ENCODE measurements at regions of chr12 and their contacts with region 1.

Region 1: DNA sequence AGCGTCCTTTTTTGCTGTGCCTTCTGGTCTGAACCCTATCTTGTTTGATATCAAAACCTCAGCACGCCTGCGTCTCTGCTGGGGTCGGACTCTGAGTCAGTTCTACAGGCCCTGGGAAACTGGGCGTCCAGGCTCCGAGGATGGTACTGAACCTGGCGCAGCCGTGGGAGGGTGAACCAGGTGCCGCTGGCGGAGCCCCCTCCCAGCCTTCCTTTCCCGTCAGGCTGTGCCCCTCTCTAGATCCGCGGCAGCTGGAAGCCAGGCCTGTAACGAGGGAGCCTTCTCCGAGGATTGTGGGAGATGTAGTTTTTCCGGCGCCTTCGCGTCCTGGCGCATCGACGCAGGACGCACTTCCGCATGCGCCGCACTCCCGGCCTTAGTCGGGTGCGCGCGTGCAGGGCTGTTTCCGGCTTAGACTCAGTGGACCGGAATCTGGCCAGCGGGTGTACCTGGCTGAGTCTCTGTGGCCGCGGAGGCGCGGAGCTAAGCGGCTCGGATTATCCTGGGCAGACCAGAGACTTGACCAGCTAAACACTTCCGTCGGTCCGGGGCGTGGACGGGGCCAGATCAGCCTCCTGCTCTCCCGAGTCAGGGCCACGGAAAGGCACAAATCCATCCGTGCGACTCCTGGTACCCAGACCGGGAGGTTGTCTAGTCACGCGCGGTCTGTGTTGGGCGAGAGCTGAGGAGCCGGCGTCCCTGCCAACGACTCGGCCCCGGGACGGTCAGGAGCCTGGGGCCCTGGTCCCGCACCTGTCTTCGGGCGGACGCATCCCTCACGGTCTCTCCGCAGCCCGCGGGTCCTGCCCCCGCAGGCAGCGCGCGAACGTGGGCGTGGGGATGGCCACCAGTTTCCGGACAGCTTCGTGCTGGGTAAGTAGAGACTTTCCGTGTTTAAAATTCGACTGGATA is at the start of gene ZNF26:
- DNase-seq: peak; percentile 92
- H3K4me3 Mint-ChIP-seq: peak within 1 kb of the TSS; percentile 89
- H3K27ac Mint-ChIP-seq: peak within 1 kb of the TSS; percentile 94
- H3K4me1 Mint-ChIP-seq: peaks cover 27% of the 10 kb centered on the region
- H3K27me3 Mint-ChIP-seq: no peaks in the 10 kb centered on the region
- total RNA-seq, gene ZNF26: 10.2 to 10.8 TPM

Region 2: DNA sequence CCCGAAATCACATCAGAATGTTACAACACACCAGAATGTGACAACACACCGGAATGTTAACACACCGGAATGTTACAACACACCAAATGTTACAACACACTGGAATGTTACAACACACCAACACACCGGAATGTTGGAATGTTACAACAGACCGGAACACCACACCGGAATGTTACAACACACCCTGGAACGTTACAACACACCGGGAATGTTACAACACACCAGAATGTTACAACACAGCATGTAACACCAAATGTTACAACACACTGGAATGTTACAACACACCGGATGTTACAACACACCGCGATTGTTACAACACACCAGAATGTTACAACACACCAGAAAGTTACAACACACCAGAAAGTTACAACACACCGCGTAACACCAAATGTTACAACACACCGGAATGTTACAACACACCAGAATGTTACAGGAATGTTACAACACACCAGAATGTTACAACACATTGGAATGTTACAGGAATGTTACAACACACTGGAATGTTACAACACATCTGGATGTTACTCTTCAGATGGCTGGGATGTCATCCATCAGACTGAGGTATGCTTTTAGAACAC is 119.9 kb before region 1 on chr12:
- CTCF ChIA-PET with region 1: no interaction called
- POLR2A ChIA-PET with region 1: no interaction called
- intact Hi-C with region 1: no loop called
- DNase-seq: no peak
- H3K4me3 Mint-ChIP-seq: no peak overlapping the region
- H3K27ac Mint-ChIP-seq: no peak overlapping the region
- H3K4me1 Mint-ChIP-seq: peaks cover 10% of the 10 kb centered on the region
- H3K27me3 Mint-ChIP-seq: no peaks in the 10 kb centered on the region

Region 3: DNA sequence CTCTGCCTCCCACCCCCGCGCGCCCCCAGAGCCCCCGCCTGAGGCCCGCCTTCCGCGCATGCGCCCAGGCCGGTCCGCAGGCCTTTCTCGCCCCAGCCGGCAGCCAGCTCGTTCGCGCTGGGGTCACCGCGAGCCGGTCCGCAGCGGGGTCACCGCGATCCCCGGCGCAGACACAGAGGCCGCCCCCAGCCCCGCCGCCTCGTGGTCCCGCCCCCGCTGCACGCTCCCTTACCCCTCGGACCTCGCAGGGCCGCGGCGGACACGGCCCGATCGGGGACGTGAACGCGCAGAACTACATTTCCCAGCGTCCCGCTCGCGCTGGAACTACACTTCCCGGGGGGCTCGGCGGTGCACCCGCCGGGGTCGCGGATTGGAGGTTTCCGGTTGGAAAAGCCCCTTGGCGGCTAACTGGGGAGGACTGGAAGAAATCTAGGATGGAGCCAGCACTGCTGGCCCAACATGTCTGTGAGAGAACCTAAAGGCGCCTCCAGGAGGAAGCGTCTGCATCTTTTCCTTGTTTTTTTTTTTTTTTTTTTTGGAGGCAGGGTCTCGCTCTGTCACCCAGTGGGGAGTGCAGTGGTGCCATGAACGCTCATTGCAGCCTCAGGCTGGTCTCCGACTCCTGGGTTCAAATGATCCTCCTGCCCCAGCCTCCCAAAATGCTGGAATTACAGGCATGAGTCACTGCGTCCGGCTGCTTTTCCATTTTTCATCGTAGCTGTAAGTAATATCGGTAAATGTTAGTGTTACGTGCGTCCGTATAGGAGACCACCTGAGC is 30.1 kb before region 1 on chr12 and contains the start of gene ZNF605:
- CTCF ChIA-PET with region 1: interaction called, 5 read pairs
- POLR2A ChIA-PET with region 1: interaction called, 10 read pairs
- intact Hi-C with region 1: loop called (anchors 1 kb)
- DNase-seq: peak; percentile 93
- H3K4me3 Mint-ChIP-seq: peak within 1 kb of the TSS; percentile 88
- H3K27ac Mint-ChIP-seq: peak within 1 kb of the TSS; percentile 89
- H3K4me1 Mint-ChIP-seq: peaks cover 31% of the 10 kb centered on the region
- H3K27me3 Mint-ChIP-seq: no peaks in the 10 kb centered on the region
- total RNA-seq, gene ZNF605: 4.6 to 5.3 TPM

Region 4: GRCh38 chr12:133181238-133181959 is 195.1 kb after region 1 on chr12 and contains the start of gene ZNF268:
- CTCF ChIA-PET with region 1: interaction called, 5 read pairs
- POLR2A ChIA-PET with region 1: interaction called, 8 read pairs
- intact Hi-C with region 1: loop called (anchors 1 kb)
- DNase-seq: peak; percentile 94
- H3K4me3 Mint-ChIP-seq: peak within 1 kb of the TSS; percentile 95
- H3K27ac Mint-ChIP-seq: peak within 1 kb of the TSS; percentile 80
- H3K4me1 Mint-ChIP-seq: peaks cover 12% of the 10 kb centered on the region
- H3K27me3 Mint-ChIP-seq: no peaks in the 10 kb centered on the region
- total RNA-seq, gene ZNF268: 9.2 to 11.8 TPM

Measured in activated CD4-positive, alpha-beta memory T cell treated with anti-CD3 and anti-CD28 coated beads for 36 hours (primary cell).